Activated CD4-positive, alpha-beta T cell treated with anti-CD3 and anti-CD28 coated beads, Interleukin-2, amount 10 ng/mL, durations not matched to agents 24 days and 14 days (primary cell): ENCODE measurements at regions of chr1 and their contacts with region 1.

Region 1: GRCh38 chr1:202348509-202349205 is at the start of gene PPP1R12B:
- DNase-seq: peak; percentile 99
- H3K4me3 Mint-ChIP-seq: peak within 1 kb of the TSS; percentile 83
- H3K27ac Mint-ChIP-seq: peak within 1 kb of the TSS; percentile 93
- H3K4me1 Mint-ChIP-seq: peaks cover 26% of the 10 kb centered on the region
- H3K27me3 Mint-ChIP-seq: no peaks in the 10 kb centered on the region
- total RNA-seq, gene PPP1R12B: 14.2 and 14.8 TPM in 2 replicates

Region 2: GRCh38 chr1:202291961-202292712 is 56.5 kb before region 1 on chr1:
- intact Hi-C with region 1: no loop called
- DNase-seq: no peak
- H3K4me3 Mint-ChIP-seq: no peak overlapping the region
- H3K27ac Mint-ChIP-seq: no peak overlapping the region
- H3K4me1 Mint-ChIP-seq: peaks cover 18% of the 10 kb centered on the region
- H3K27me3 Mint-ChIP-seq: peaks cover 27% of the 10 kb centered on the region

Region 3: GRCh38 chr1:202365092-202365815 is 16.6 kb after region 1 on chr1:
- intact Hi-C with region 1: no loop called
- DNase-seq: no peak
- H3K4me3 Mint-ChIP-seq: no peak overlapping the region
- H3K27ac Mint-ChIP-seq: no peak overlapping the region
- H3K4me1 Mint-ChIP-seq: no peaks in the 10 kb centered on the region
- H3K27me3 Mint-ChIP-seq: no peaks in the 10 kb centered on the region

Region 4: DNA sequence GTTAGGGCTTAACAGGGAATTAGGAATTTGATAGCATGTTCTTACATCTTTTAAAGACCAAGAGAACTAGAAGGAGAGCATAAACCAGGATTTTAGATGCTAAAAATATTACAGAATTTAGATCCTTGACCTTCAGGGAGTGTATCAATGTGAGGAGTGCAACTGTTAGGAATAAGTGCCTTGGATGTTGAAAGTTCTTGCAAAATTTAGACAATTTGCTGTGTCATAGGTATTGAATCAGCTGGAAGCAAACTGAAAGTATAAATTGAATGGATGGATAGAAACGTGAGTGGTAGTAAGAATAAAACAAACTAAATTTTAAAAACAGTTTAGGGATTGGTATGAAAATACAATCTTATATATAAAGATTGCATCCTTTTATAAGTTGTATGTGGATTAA is 27.6 kb after region 1 on chr1:
- intact Hi-C with region 1: loop called (anchors 2 kb)
- DNase-seq: no peak
- H3K4me3 Mint-ChIP-seq: no peak overlapping the region
- H3K27ac Mint-ChIP-seq: no peak overlapping the region
- H3K4me1 Mint-ChIP-seq: peaks cover 18% of the 10 kb centered on the region
- H3K27me3 Mint-ChIP-seq: peaks cover 6% of the 10 kb centered on the region

Region 5: GRCh38 chr1:202498542-202498941 is 149.9 kb after region 1 on chr1:
- intact Hi-C with region 1: no loop called
- DNase-seq: no peak
- H3K4me3 Mint-ChIP-seq: no peak overlapping the region
- H3K27ac Mint-ChIP-seq: no peak overlapping the region
- H3K4me1 Mint-ChIP-seq: no peaks in the 10 kb centered on the region
- H3K27me3 Mint-ChIP-seq: no peaks in the 10 kb centered on the region

Region 6: GRCh38 chr1:202571347-202572339 is 223.0 kb after region 1 on chr1:
- intact Hi-C with region 1: loop called (anchors 2 kb)
- DNase-seq: peak; percentile 78
- H3K4me3 Mint-ChIP-seq: no peak overlapping the region
- H3K27ac Mint-ChIP-seq: no peak overlapping the region
- H3K4me1 Mint-ChIP-seq: peaks cover 5% of the 10 kb centered on the region
- H3K27me3 Mint-ChIP-seq: no peaks in the 10 kb centered on the region

Region 7: GRCh38 chr1:202888531-202889360 is 540.1 kb after region 1 on chr1 and contains the start of gene RABIF:
- intact Hi-C with region 1: loop called (anchors 5 kb)
- DNase-seq: peak; percentile 99
- H3K4me3 Mint-ChIP-seq: peak within 1 kb of the TSS; percentile 93
- H3K27ac Mint-ChIP-seq: peak within 1 kb of the TSS; percentile 98
- H3K4me1 Mint-ChIP-seq: peaks cover 20% of the 10 kb centered on the region
- H3K27me3 Mint-ChIP-seq: peaks cover 2% of the 10 kb centered on the region
- total RNA-seq, gene RABIF: 11.8 and 12.7 TPM in 2 replicates

Region 8: GRCh38 chr1:202957733-202958543 is 609.3 kb after region 1 on chr1 and contains the start of gene ADIPOR1:
- intact Hi-C with region 1: loop called (anchors 5 kb)
- DNase-seq: peak; percentile 98
- H3K4me3 Mint-ChIP-seq: peak within 1 kb of the TSS; percentile 89
- H3K27ac Mint-ChIP-seq: peak within 1 kb of the TSS; percentile 82
- H3K4me1 Mint-ChIP-seq: peaks cover 31% of the 10 kb centered on the region
- H3K27me3 Mint-ChIP-seq: no peaks in the 10 kb centered on the region
- total RNA-seq, gene ADIPOR1: 86.7 and 92.1 TPM in 2 replicates

Region 9: DNA sequence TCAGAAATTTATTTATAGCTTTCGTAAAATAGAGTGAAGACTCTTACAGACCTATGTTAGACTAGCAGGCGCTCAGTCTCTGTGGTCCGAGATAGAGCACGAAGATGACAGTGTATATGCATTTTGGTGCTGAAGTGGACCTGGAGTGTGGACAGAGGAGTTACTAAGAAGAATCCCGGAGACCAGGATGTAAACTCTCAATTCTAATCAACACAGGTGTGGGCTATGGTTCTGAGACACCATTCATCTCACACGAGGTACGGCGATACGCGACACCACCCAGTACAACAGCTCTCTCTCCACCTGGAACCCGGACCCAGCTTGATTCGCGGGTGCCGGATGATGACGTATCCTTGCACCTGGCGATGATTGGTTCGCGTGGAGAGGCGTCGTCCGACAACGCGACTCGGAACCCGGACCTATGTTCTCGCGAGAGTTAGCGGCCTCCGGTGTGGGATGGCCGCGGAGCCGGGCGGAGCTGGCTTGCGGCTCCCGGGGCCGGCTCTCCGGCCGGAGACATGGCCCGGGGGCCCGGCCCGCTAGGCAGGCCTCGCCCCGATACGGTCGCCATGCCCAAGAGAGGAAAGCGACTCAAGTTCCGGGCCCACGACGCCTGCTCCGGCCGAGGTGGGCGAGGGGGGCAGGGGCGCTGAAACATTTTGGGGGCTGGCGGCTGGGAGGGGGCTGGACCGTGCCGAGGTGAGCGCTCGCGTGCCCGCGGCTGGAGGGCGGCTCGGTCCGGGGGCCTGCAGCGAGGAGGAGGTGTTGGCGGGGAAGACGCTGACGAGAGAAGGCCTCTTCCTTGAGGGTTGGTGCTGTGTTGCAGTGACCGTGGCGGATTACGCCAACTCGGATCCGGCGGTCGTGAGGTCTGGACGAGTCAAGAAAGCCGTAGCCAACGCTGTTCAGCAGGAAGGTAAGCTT is 658.6 kb after region 1 on chr1 and contains the start of gene TMEM183A:
- intact Hi-C with region 1: loop called (anchors 10 kb)
- DNase-seq: peak; percentile 98
- H3K4me3 Mint-ChIP-seq: peak within 1 kb of the TSS; percentile 86
- H3K27ac Mint-ChIP-seq: peak within 1 kb of the TSS; percentile 97
- H3K4me1 Mint-ChIP-seq: peaks cover 22% of the 10 kb centered on the region
- H3K27me3 Mint-ChIP-seq: no peaks in the 10 kb centered on the region
- total RNA-seq, gene TMEM183A: 77.7 and 82.8 TPM in 2 replicates

Region 10: GRCh38 chr1:203326830-203327683 is 978.4 kb after region 1 on chr1:
- intact Hi-C with region 1: loop called (anchors 10 kb)
- DNase-seq: peak; percentile 98
- H3K4me3 Mint-ChIP-seq: peak overlapping the region; percentile 83
- H3K27ac Mint-ChIP-seq: peak overlapping the region; percentile 94
- H3K4me1 Mint-ChIP-seq: peaks cover 61% of the 10 kb centered on the region
- H3K27me3 Mint-ChIP-seq: no peaks in the 10 kb centered on the region